ENCODE measurements at regions of chr9 and their contacts with region 1.

Region 1: DNA sequence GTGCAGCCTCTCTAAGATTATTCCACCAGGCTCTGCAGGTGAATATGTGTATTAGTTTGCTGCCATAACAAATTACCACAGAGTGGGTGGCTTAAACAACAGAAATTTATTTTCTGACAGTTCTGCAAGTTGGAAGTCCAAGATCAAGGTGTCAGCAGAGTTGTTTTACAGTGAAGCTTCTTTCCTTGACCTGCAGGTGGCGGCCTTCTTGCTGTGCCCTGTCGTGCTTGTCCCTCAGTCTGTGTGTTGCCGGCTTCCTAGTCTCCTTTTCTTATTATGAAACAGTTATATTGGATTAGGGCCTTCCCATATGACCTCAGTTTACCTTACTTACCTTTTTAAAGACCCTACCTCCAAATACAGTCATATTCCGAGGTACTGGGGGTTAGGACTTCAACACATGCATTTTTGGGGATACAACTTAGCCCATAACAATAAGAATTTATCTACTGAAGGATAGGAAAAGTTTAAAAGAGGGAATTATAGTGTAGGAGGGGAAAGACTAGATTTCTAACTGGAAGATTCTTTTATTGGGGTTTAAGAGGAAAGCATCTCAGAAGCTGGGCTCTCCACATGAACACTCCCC is 97.4 kb downstream of the OSTF1 start:
- DNase-seq: peak; percentile 26
- CTCF ChIP-seq: peak; percentile 67

Region 2: DNA sequence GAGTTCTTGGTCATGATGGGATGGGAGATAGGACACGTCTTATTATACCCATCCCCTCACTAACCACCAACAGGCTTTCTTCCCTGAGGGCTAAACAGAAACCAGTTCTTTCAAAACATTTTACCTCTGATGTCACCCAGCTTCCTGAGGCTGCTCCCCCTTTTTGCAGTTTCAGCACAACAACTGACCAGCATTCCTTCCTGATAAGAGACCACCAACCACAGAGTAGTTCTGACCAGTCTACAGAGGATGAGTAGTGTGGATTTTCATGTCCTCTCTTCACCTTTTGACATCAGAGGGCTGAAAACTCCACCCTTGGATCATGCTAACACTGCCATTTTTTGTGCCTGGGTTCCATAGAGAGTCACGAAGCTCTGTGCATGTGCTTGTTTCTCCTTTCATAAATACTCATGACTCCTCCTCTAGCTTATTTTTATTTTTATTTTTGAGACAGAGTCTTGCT is 14.7 kb before region 1 on chr9:
- CTCF ChIA-PET with region 1: interaction called, 28 read pairs
- POLR2A ChIA-PET with region 1: no interaction called
- DNase-seq: no peak
- CTCF ChIP-seq: no peak

Region 3: DNA sequence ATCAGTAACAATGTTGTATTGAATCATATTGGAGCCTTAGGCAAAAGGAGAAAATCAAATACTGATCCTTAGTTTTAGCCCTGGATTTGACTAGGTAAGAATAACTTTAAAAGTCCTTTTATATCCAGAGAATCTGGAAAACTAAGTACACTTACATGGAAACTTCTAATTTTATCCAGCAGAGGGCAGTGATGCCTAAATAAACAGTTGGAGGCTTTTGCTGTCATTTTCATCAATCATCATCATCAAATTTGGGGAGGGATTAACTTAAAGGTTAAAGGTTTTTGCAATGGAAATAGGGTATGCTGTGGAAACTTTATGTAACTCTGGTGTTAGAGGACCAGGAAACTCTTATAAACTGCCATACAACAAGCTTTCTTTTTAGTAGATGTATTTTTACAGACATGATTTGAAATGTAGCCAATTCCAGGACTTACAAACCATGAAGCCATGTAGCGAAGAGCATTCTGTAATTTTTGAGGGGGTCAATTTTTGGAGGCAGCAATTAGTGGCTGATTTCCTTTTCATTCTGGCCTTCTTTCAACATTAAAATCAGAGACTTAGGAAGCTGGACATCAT is 15.3 kb after region 1 on chr9:
- CTCF ChIA-PET with region 1: interaction called, 23 read pairs
- POLR2A ChIA-PET with region 1: no interaction called
- DNase-seq: peak; percentile 31
- CTCF ChIP-seq: peak; percentile 58

Region 4: DNA sequence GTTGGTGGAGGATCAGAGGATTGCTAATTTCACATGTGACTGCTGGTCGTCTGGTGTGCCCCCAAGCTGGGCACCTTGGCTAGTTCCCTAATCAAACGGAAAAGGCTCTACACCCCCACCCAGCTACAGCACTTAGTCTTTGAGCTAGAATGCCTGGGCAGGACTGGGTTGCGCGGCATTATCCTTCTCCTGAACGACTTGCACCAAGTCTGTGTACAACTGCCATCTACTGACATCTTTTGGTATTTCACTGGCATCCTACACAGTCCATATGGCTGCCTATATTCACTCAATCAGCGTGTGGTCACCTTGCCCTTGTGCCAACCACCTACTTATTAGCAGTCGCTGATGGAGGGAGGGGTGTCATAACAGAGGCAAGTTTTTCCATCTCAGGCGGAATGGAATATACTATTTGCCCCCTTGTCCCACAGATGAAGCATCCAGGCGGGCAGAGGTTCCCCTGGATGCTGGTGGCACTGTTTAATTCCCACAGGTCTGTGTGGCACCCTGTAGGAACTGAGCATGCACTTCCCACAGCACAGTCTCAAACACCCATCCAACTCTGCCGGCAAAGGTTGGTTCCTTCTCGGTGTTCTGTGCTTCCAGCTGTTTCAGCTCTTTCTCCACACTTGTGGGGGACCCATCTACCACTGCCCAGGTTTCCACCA is 52.8 kb after region 1 on chr9:
- CTCF ChIA-PET with region 1: interaction called, 12 read pairs
- POLR2A ChIA-PET with region 1: no interaction called
- DNase-seq: peak; percentile 39
- CTCF ChIP-seq: peak; percentile 46

Measured in GM10248 (cell line).